ENCODE measurements at regions of chr1 and their contacts with region 1.

Region 1: GRCh38 chr1:203273206-203273868 is 32.0 kb upstream of the BTG2 start:
- DNase-seq: peak; percentile 91 to 93
- H3K4me3 ChIP-seq: peak overlapping the region in 1 of 3 donors; percentile 4
- H3K27ac ChIP-seq: peak overlapping the region; percentile 73 to 90 (median 74)
- H3K4me1 ChIP-seq: peaks cover 43 to 90% of the 10 kb centered on the region in 2 donors
- H3K27me3 ChIP-seq: no peaks in the 10 kb centered on the region
- CTCF ChIP-seq: peak; percentile 93 to 99 (median 98)
- POLR2A ChIP-seq: peak in 1 of 2 donors; percentile 56

Region 2: GRCh38 chr1:203340112-203340804 is 66.9 kb after region 1 on chr1:
- intact Hi-C with region 1: loop called (anchors 5 kb)
- DNase-seq: peak; percentile 73
- H3K4me3 ChIP-seq: no peak overlapping the region
- H3K27ac ChIP-seq: peak overlapping the region in 2 of 3 donors; percentile 36 to 52
- H3K4me1 ChIP-seq: peaks cover 31 to 39% of the 10 kb centered on the region in 2 donors
- H3K27me3 ChIP-seq: no peaks in the 10 kb centered on the region
- CTCF ChIP-seq: peak; percentile 66 to 94 (median 84)
- POLR2A ChIP-seq: no peak

Region 3: GRCh38 chr1:203440771-203441170 is 167.4 kb after region 1 on chr1:
- intact Hi-C with region 1: loop called (anchors 10 kb)
- DNase-seq: peak; percentile 93 to 94
- H3K4me3 ChIP-seq: no peak overlapping the region
- H3K27ac ChIP-seq: peak overlapping the region; percentile 10 to 67 (median 61)
- H3K4me1 ChIP-seq: peaks cover 0 to 15% of the 10 kb centered on the region in 2 donors
- H3K27me3 ChIP-seq: no peaks in the 10 kb centered on the region
- CTCF ChIP-seq: peak in 5 of 6 experiments; percentile 34 to 86 (median 69)
- POLR2A ChIP-seq: no peak

Region 4: GRCh38 chr1:203486618-203487370 is 213.5 kb after region 1 on chr1:
- intact Hi-C with region 1: loop called (anchors 5 kb)
- DNase-seq: no peak
- H3K4me3 ChIP-seq: peak overlapping the region in 1 of 3 donors; percentile 25
- H3K27ac ChIP-seq: peak overlapping the region in 2 of 3 donors; percentile 74 to 80
- H3K4me1 ChIP-seq: peaks cover 4 to 7% of the 10 kb centered on the region in 2 donors
- H3K27me3 ChIP-seq: no peaks in the 10 kb centered on the region
- CTCF ChIP-seq: no peak
- POLR2A ChIP-seq: no peak

Region 5: GRCh38 chr1:203512830-203513611 is 239.7 kb after region 1 on chr1:
- intact Hi-C with region 1: no loop called
- DNase-seq: no peak
- H3K4me3 ChIP-seq: no peak overlapping the region
- H3K27ac ChIP-seq: no peak overlapping the region
- H3K4me1 ChIP-seq: peaks cover 0 to 14% of the 10 kb centered on the region in 2 donors
- H3K27me3 ChIP-seq: no peaks in the 10 kb centered on the region
- CTCF ChIP-seq: no peak
- POLR2A ChIP-seq: no peak

Region 6: DNA sequence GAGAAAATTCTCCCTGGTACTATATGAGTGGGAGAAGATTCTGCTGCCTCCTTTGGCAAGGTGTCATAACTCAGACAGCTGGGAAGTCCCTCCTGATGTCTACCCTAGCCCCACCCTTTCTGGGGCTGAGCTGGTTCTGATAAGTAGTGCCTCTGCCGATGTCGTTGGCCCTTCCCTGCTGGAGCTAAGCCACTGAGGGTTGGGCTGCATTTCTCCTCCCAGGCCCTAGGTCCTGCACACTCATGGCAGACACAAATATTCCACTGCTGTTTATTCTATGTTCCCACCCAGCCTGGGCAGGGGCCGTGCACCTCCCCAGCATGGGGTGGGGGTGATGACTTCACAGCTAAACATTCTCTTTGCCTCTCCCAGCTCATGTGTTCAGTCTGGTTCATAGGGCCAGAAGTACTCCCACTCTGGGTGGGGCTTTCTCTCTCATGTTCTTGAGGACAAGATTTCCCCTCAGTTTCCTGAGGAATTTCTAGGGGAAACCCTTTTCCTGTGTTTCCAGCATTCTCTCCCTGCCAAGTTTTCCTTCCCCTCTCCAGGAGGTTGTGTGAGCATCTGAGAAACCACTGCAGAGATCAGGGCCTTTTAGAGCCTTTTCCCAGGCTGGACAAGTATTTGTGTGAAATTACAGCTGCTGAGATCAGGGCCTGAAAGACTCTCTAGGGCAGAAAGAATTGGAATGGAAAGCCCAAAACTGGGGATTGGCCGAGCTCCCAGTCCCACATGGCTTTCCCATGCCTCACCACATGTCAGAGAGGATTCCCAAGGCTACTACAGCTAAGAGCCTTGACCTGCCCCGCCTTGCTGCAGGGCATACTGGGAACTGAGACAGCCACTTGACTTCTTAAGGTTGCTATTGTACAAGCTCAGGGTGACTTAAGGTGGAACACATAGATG is 419.5 kb after region 1 on chr1:
- intact Hi-C with region 1: loop called (anchors 10 kb)
- DNase-seq: peak; percentile 94 to 95
- H3K4me3 ChIP-seq: no peak overlapping the region
- H3K27ac ChIP-seq: peak overlapping the region; percentile 83 to 89 (median 86)
- H3K4me1 ChIP-seq: peaks cover 16 to 39% of the 10 kb centered on the region in 2 donors
- H3K27me3 ChIP-seq: no peaks in the 10 kb centered on the region
- CTCF ChIP-seq: peak in 3 of 6 experiments; percentile 12 to 39 (median 28)
- POLR2A ChIP-seq: peak in 1 of 2 donors; percentile 28

Region 7: DNA sequence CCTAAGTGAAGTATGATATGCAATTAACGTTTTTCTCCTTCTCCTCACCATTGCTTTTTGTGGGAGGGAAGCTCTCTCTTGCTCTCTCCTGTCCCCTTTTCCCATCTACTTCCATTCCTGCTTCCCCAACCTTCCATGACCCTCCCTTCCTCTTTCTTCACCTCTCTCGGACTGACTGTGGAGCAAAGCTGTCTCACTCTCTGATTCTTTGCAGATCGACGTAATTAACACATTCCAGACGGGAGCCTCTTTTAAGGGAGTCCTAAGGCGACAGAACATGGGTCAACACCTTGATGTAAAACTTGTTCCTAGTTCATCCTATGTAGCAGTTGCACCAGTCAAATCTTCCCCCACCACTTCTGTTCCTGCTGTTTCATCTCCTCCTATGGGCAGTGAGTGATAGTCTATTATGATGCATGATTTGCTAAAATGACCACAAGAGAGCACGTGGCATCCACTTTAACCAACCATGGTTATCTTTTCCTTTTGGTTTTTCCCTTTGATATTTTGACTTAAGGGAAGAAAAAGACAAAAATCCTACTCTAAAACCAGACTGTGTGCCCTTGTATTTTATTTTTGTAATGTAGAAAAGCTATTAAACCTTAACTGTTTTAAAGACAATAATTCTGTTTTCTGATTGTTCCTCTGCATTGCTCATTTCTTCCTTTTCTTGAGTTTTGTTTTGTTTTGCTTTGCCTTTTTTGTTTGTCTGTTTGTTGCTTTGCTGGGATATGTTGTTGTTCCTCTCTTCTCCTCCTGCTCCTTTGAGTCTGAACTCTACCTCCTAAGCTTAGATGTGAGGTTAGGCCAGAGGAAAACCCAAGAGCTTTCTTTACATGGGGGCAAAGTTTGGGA is 459.9 kb after region 1 on chr1:
- intact Hi-C with region 1: no loop called
- DNase-seq: no peak
- H3K4me3 ChIP-seq: no peak overlapping the region
- H3K27ac ChIP-seq: no peak overlapping the region
- H3K4me1 ChIP-seq: no peaks in the 10 kb centered on the region
- H3K27me3 ChIP-seq: no peaks in the 10 kb centered on the region
- CTCF ChIP-seq: no peak
- POLR2A ChIP-seq: no peak